Sigmoid colon (tissue), 7 donors: ENCODE measurements at regions of chr12 and their contacts with region 1.

Region 1: DNA sequence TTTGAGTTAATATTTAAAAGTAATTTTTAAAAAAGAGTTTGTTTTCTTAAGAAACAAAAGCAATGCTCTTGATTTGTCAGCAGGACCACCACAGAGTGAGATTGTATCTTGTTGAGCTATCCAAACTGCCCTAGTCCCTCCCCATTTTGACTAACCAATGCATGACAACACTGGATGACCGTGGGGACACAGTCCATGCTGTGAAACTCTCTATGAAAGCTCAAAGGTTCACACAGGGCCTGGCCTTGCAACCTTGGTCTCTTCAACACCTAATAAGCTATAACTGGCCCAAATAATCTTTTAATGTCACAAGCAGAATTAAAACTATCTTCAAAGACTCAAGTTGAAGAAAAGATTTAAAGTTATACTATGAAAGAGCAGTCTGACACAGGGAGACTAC is 13.5 kb downstream of the ETFRF1 start:
- DNase-seq: no peak
- H3K4me3 ChIP-seq: no peak overlapping the region
- H3K27ac ChIP-seq: no peak overlapping the region
- H3K4me1 ChIP-seq: no peaks in the 10 kb centered on the region
- H3K27me3 ChIP-seq: no peaks in the 10 kb centered on the region
- CTCF ChIP-seq: no peak
- EP300 ChIP-seq: no peak
- POLR2A ChIP-seq: no peak

Region 2: GRCh38 chr12:25256826-25257225 is 48.3 kb after region 1 on chr12:
- intact Hi-C with region 1: no loop called
- DNase-seq: no peak
- H3K4me3 ChIP-seq: no peak overlapping the region
- H3K27ac ChIP-seq: no peak overlapping the region
- H3K4me1 ChIP-seq: peaks cover 0 to 3% (median 0%) of the 10 kb centered on the region in 4 donors
- H3K27me3 ChIP-seq: no peaks in the 10 kb centered on the region
- CTCF ChIP-seq: no peak
- EP300 ChIP-seq: no peak
- POLR2A ChIP-seq: no peak

Region 3: DNA sequence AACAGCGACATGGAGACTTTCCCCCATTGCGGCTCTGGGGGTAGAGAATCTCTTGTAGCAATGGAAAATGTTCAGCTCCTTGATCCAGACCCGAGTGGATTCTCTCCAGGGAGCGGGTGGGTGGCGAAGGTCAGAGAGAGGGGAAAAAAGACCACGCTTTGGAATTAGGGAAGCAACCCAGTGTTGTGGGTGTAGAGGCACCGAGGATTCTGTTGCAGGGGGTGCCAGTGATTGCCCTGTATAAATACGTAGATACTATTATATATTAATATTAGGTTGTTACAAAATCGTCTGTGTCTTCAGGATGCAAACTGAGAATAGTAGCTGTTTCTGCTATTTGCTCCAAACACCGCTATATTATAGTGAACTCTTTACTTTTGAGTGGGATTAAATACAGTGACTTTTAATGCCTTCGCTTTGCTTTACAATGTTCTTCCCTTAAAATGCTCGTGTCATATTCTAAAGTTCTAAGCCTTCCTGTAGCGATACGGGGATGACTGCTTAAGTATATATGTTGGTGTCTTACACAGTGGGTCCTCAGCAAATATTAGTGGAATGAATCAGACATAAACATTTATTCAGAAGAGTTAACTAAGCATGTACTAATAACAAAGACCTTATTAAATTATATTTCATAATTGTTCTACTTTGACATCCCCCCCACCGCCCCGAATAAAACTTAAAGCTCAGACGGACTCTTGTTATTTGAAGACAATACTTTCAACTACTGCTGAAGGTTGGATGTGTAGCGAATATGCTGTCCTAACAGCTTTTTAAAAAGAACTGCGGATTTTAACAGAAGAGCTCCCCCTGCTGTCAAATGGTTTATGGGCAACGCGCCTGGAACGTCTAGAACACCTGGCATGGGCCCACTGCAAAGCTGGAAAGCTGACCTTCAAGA is 178.5 kb after region 1 on chr12:
- intact Hi-C with region 1: loop called (anchors 1 kb)
- DNase-seq: peak; percentile 94
- H3K4me3 ChIP-seq: peak overlapping the region; percentile 72 to 82 (median 76)
- H3K27ac ChIP-seq: peak overlapping the region; percentile 99 to 100 (median 99)
- H3K4me1 ChIP-seq: peaks cover 0 to 7% (median 3%) of the 10 kb centered on the region in 4 donors
- H3K27me3 ChIP-seq: no peaks in the 10 kb centered on the region
- CTCF ChIP-seq: peak in 3 of 4 experiments; percentile 72 to 83 (median 75)
- EP300 ChIP-seq: no peak
- POLR2A ChIP-seq: no peak